ENCODE measurements at regions of chr2 and their contacts with region 1.

Region 1: GRCh38 chr2:74725287-74725686 is 71.2 kb downstream of the SEMA4F start:
- DNase-seq: no peak
- ATAC-seq: no peak
- H3K4me3 ChIP-seq: no peak overlapping the region
- H3K4me3 Mint-ChIP-seq: no peak overlapping the region
- H3K27ac ChIP-seq: no peak overlapping the region
- H3K27ac Mint-ChIP-seq: no peak overlapping the region
- H3K4me1 ChIP-seq: no peaks in the 10 kb centered on the region
- H3K4me1 Mint-ChIP-seq: no peaks in the 10 kb centered on the region
- H3K27me3 ChIP-seq: no peaks in the 10 kb centered on the region
- H3K27me3 Mint-ChIP-seq: peaks cover 16% of the 10 kb centered on the region
- CTCF ChIP-seq: no peak

Region 2: GRCh38 chr2:74333175-74333574 is 392.1 kb before region 1 on chr2:
- CTCF ChIA-PET with region 1: no interaction called
- POLR2A ChIA-PET with region 1: no interaction called
- intact Hi-C with region 1: no loop called
- DNase-seq: no peak
- ATAC-seq: no peak
- H3K4me3 ChIP-seq: no peak overlapping the region
- H3K4me3 Mint-ChIP-seq: no peak overlapping the region
- H3K27ac ChIP-seq: no peak overlapping the region
- H3K27ac Mint-ChIP-seq: no peak overlapping the region
- H3K4me1 ChIP-seq: no peaks in the 10 kb centered on the region
- H3K4me1 Mint-ChIP-seq: peaks cover 3% of the 10 kb centered on the region
- H3K27me3 ChIP-seq: no peaks in the 10 kb centered on the region
- H3K27me3 Mint-ChIP-seq: no peaks in the 10 kb centered on the region
- CTCF ChIP-seq: no peak

Region 3: DNA sequence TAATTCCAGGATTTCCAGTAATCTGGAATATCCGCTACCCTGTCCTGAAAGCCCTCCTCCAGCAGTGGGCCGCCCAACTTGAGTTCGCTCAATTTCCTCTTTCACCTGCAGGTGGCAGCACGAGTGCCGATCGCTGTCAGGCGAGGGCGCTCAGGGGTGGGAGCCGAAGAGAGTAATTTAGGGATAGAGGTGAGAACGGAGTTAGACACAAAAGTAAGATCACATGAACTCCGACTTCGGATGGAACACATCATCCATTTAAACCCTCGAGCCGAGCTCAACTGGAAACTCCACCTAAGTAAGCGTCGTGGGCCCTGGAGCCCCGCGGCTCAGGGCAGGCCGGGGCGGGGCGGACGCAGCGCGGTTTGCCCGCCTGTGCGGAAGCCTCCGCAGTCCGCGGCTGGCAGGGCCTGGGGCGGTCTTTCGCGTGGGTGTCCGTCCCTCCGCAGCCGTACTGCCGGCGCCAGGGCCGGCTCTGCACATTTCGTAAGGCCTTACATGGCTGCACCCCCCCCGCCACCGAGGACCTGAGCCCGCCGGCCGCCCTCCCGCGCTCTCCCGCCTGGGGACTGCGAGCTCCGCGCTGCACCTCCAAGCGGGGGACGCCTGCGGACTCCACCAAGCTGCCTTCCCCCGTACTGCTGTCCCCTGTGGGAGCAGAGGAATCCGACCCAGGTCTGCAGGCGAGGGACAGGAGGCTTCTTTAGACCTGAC is 10.1 kb before region 1 on chr2:
- CTCF ChIA-PET with region 1: interaction called, 16 read pairs
- POLR2A ChIA-PET with region 1: no interaction called
- intact Hi-C with region 1: no loop called
- DNase-seq: peak; percentile 60 to 86 (median 79)
- ATAC-seq: peak; percentile 92
- H3K4me3 ChIP-seq: peak overlapping the region; percentile 29 to 35
- H3K4me3 Mint-ChIP-seq: peak overlapping the region; percentile 94
- H3K27ac ChIP-seq: no peak overlapping the region
- H3K27ac Mint-ChIP-seq: no peak overlapping the region
- H3K4me1 ChIP-seq: peaks cover 5% of the 10 kb centered on the region
- H3K4me1 Mint-ChIP-seq: peaks cover 9% of the 10 kb centered on the region
- H3K27me3 ChIP-seq: peaks cover 0 to 2% of the 10 kb centered on the region in 2 experiments
- H3K27me3 Mint-ChIP-seq: peaks cover 17% of the 10 kb centered on the region
- CTCF ChIP-seq: peak; percentile 84